Mammary epithelial cell (primary cell): ENCODE measurements at regions of chr11 and their contacts with region 1.

Region 1: DNA sequence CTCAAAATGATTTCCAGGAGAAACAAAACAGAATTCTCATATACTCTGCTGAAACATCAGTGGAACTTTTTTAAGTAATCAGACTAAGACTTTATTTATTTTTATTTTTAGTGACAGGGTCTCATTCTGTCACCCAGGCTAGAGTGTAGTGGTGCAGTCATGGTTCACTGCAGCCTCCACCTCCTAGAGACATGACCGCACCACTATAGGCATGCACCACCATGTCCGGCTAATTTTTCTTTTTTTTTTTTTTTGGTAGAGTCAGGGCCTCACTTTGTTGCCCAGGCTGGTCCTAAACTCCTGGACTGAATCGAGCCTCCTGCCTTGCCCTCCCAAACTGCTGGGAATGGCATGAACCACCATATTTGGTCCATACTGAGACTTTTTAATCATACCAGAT is 42.9 kb downstream of the PRDM10 start:
- DNase-seq: no peak
- H3K4me3 ChIP-seq: no peak overlapping the region
- H3K27ac ChIP-seq: no peak overlapping the region
- H3K4me1 ChIP-seq: peaks cover 12% of the 10 kb centered on the region
- H3K27me3 ChIP-seq: no peaks in the 10 kb centered on the region
- CTCF ChIP-seq: no peak

Region 2: DNA sequence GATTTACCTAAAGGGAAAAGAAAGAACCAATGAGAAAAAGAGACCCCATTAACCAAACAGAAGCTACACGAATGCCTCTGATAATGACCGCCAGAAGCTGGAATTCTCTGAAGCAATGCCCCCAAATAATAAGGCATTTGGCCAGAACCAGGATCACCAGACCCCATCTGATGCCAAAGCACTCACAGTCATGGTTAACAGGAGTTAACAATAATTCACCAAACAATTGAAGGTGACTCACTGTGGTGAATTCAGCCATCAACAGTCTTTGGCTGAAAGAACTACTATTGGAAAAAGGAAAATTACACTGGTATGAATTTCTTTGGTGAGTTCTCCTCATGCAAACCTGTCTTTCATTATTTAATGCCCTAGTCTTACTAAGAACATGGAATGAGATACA is 42.5 kb before region 1 on chr11:
- CTCF ChIA-PET with region 1: no interaction called
- dilution Hi-C with region 1: loop called (anchors 5 kb)
- in situ Hi-C with region 1: no loop called
- intact Hi-C with region 1: no loop called
- DNase-seq: no peak
- H3K4me3 ChIP-seq: no peak overlapping the region
- H3K27ac ChIP-seq: no peak overlapping the region
- H3K4me1 ChIP-seq: no peaks in the 10 kb centered on the region
- H3K27me3 ChIP-seq: no peaks in the 10 kb centered on the region
- CTCF ChIP-seq: no peak